PC-9 (cell line): ENCODE measurements at regions of chr17 and their contacts with region 1.

Region 1: GRCh38 chr17:48610282-48611211 is at the start of gene HOXB7:
- DNase-seq: peak; percentile 52 to 64
- H3K4me3 ChIP-seq: peak within 1 kb of the TSS; percentile 80
- H3K27ac ChIP-seq: peak within 1 kb of the TSS; percentile 63
- H3K4me1 ChIP-seq: peaks cover 23% of the 10 kb centered on the region
- H3K27me3 ChIP-seq: no peaks in the 10 kb centered on the region
- CTCF ChIP-seq: no peak
- total RNA-seq, gene HOXB7: 28.2 and 34.0 TPM in 2 replicates

Region 2: GRCh38 chr17:48131216-48131824 is 479.2 kb before region 1 on chr17:
- CTCF ChIA-PET with region 1: interaction called, 10 read pairs
- POLR2A ChIA-PET with region 1: no interaction called
- intact Hi-C with region 1: no loop called
- DNase-seq: peak; percentile 47 to 64
- H3K4me3 ChIP-seq: no peak overlapping the region
- H3K27ac ChIP-seq: no peak overlapping the region
- H3K4me1 ChIP-seq: peaks cover 15% of the 10 kb centered on the region
- H3K27me3 ChIP-seq: no peaks in the 10 kb centered on the region
- CTCF ChIP-seq: peak; percentile 94

Region 3: GRCh38 chr17:48335858-48336500 is 274.6 kb before region 1 on chr17:
- CTCF ChIA-PET with region 1: interaction called, 4 read pairs
- POLR2A ChIA-PET with region 1: interaction called, 11 read pairs
- intact Hi-C with region 1: no loop called
- DNase-seq: peak in 1 of 2 experiments; percentile 49
- H3K4me3 ChIP-seq: no peak overlapping the region
- H3K27ac ChIP-seq: no peak overlapping the region
- H3K4me1 ChIP-seq: peaks cover 28% of the 10 kb centered on the region
- H3K27me3 ChIP-seq: no peaks in the 10 kb centered on the region
- CTCF ChIP-seq: peak; percentile 93

Region 4: DNA sequence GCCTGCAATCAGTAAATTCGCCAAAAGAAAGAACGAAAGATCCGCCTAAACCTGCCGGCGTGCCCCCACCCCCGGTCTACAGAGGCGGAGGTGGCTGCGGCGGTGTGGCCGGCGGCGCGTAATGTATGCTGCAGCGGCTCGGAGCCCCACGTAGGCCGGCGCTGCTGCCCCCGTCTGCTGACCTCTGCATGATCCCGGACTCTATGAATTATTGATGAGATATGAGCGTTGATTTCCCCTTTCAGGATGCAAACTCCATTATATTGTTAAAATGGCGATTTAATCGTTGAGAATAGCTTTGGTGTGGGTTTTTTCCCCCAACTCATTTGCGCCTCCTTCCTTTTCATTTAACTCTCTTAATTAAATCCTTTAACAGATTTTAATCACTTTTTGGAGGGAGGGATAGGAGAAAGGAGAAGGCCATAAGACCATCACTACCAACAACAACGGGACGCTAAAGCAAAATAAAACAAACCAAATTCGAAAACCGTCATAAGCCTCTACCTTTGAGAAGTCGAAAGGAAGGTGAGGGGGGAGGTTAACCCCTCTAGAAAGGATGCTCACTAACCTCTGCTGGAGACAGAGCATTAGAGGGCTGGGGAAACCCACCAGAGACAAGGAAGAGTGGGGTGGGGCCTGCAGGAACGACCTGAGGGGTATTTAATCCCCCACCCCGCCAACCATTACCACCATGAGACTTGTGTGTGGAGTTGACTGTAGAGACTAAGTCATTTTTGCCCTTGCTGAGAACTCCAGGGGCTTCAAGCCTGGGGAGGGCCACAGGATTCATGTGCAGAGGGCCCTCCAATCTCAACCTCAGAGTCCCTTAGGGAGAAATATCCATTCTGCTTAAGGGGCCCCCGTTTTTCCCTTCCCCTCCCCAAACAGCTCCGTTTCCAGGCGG is 23.9 kb before region 1 on chr17:
- CTCF ChIA-PET with region 1: no interaction called
- POLR2A ChIA-PET with region 1: interaction called, 7 read pairs
- intact Hi-C with region 1: loop called (anchors 1 kb)
- DNase-seq: no peak
- H3K4me3 ChIP-seq: peak overlapping the region; percentile 67; the same call in 1 of the 2 replicates
- H3K27ac ChIP-seq: no peak overlapping the region
- H3K4me1 ChIP-seq: peaks cover 12% of the 10 kb centered on the region
- H3K27me3 ChIP-seq: no peaks in the 10 kb centered on the region
- CTCF ChIP-seq: no peak

Region 5: GRCh38 chr17:48636177-48637018 is 25.9 kb after region 1 on chr17:
- CTCF ChIA-PET with region 1: interaction called, 14 read pairs
- POLR2A ChIA-PET with region 1: no interaction called
- intact Hi-C with region 1: no loop called
- DNase-seq: peak; percentile 59 to 87
- H3K4me3 ChIP-seq: no peak overlapping the region
- H3K27ac ChIP-seq: no peak overlapping the region
- H3K4me1 ChIP-seq: no peaks in the 10 kb centered on the region
- H3K27me3 ChIP-seq: peaks cover 74% of the 10 kb centered on the region
- CTCF ChIP-seq: peak; percentile 65

Region 6: DNA sequence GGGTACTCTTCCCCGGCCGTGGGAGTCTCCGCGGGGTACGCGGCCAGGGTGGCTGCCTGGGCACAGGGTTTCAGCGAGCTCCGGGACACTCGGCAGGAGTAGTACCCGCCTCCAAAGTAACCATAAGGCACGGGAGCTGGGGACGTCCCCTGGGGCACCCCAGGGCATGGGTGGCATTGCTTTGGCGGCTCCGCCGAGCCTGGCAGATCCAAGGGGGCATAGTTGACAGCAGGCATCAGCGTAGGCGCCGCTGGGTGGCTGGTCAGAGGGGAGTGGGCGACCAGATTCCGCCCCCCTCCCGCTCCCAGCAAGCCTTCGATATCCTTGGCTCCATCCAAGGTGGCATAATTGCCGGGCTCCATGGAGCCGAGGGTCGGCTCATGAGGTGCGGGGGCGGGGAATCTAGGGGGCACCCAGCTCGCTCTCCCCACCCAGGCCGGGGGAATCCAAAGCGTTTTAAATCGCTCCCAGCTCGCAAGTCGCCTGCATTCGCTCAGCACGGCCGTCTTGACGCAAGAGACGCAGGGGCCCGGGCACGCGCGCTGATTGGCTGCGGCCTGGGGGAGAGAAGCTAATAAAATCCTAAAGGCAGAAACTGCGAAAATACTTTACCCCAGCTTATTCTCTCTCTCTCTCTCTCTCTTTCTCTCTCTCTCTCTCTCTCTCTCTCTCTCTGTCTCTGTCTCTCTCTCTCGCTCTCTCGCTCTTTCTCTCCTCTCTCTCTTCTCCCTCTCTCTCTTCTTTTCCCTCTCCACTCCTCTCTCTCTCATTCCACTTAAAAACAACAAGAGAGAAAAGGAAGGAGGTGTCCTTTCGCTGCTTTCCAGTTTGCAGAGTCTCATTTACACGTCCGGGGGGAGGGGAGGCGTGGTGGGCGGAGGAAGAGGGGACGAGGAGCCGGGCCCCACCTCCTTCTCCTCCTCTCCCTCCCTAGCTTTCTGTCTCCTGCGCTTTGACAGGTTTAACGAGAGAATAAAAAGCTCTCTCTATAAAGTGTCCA is 118.0 kb after region 1 on chr17 and contains the start of gene HOXB13:
- CTCF ChIA-PET with region 1: no interaction called
- POLR2A ChIA-PET with region 1: no interaction called
- intact Hi-C with region 1: no loop called
- DNase-seq: peak in 1 of 2 experiments; percentile 16
- H3K4me3 ChIP-seq: no peak within 1 kb of the TSS
- H3K27ac ChIP-seq: no peak within 1 kb of the TSS
- H3K4me1 ChIP-seq: no peaks in the 10 kb centered on the region
- H3K27me3 ChIP-seq: peaks cover 93% of the 10 kb centered on the region
- CTCF ChIP-seq: no peak
- total RNA-seq, gene HOXB13: 0.15 TPM in 1 of 2 replicates, not detected in the other